Activated naive CD4-positive, alpha-beta T cell treated with anti-CD3 and anti-CD28 coated beads, Interleukin-2, amount 10 ng/mL, durations not matched to agents 7 days and 5 days (primary cell): ENCODE measurements at regions of chr1 and their contacts with region 1.

Region 1: DNA sequence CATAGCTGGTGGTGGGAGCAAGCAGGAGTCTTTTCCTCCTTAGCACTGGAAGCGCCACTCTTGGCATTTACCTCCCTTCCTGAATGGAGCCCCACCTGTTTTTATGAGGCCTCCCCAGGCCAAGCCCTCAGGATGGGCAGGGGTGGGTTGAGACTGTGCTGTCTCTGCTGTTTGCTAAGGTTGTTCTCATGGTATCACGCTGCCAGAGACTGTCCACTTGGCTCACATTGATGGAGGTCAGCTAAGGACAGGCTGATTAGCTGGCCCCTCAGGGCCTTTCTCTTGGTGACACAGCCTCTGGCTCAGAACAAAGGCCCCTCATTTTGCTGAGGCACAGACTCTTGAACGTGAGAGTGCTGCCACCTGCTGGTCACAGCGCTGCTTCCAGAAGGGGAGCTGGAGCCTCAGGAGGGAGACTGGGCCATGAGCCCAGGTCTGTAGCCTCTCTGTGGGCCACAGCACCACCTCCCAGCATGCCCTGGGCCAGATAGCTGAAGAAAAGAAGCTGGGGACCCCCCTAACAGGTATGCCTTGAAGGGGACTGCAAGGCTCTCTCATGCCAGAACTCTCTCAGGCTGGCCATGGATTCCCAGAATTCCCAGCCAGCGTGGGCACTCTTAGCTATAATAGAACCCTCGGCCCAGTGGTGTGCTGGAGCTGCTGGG is 85.6 kb downstream of the CD58 start:
- DNase-seq: peak; percentile 92
- H3K4me3 Mint-ChIP-seq: no peak overlapping the region
- H3K27ac Mint-ChIP-seq: no peak overlapping the region
- H3K4me1 Mint-ChIP-seq: peaks cover 3% of the 10 kb centered on the region
- H3K27me3 Mint-ChIP-seq: peaks cover 17% of the 10 kb centered on the region

Region 2: DNA sequence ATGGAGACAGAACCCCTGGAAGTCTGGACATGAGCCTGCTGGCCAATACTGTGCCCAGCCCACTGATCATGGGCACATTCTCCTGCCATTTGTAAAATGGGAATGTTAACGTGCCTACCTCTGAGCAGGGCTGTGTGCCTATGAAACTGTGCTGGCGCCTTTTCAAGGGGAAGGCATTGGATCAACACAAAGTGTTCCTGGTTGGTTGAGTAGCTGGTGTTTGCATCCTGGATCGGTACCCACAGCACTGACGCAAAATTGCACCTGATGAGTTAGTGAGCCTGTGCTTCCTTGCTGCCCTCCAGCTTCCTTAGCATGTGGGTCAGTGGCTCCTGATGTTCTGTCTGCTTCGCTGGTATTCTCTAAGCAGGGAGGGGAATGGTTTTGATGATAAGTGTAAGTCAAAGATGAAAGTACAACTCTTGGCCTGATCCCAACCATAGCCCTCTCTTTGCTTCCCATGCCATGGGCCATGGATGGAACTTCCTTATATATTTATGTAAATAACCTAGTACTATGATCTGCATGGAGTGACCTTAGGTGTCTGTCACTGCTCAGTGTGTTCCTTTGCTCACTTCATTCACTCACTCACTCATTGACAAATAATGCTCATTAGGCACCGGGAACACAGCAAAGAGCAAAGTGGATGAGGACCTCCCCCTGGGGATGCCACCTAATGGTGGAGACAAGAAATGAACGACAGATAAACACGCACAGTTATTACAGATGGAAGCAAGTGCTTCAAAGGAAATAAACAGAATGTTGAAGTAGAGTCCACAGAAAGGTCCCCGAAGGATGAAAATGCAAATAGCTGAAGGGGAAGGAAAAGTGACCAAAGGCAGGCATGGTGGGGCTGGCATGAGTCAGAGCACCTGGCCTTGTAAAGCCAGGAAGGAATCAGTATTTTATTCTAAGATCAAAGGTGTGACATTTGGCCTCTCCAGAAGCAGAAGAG is 351.2 kb before region 1 on chr1:
- CTCF ChIA-PET with region 1: interaction called, 506 read pairs
- DNase-seq: no peak
- H3K4me3 Mint-ChIP-seq: no peak overlapping the region
- H3K27ac Mint-ChIP-seq: no peak overlapping the region
- H3K4me1 Mint-ChIP-seq: peaks cover 7% of the 10 kb centered on the region
- H3K27me3 Mint-ChIP-seq: peaks cover 11% of the 10 kb centered on the region

Region 3: GRCh38 chr1:116151739-116152576 is 333.2 kb before region 1 on chr1:
- CTCF ChIA-PET with region 1: interaction called, 83 read pairs
- DNase-seq: peak; percentile 76
- H3K4me3 Mint-ChIP-seq: peak overlapping the region; percentile 35
- H3K27ac Mint-ChIP-seq: peak overlapping the region; percentile 50
- H3K4me1 Mint-ChIP-seq: peaks cover 19% of the 10 kb centered on the region
- H3K27me3 Mint-ChIP-seq: peaks cover 21% of the 10 kb centered on the region

Region 4: GRCh38 chr1:116462722-116463121 is 22.5 kb before region 1 on chr1:
- CTCF ChIA-PET with region 1: interaction called, 11 read pairs
- DNase-seq: no peak
- H3K4me3 Mint-ChIP-seq: no peak overlapping the region
- H3K27ac Mint-ChIP-seq: no peak overlapping the region
- H3K4me1 Mint-ChIP-seq: no peaks in the 10 kb centered on the region
- H3K27me3 Mint-ChIP-seq: peaks cover 32% of the 10 kb centered on the region

Region 5: DNA sequence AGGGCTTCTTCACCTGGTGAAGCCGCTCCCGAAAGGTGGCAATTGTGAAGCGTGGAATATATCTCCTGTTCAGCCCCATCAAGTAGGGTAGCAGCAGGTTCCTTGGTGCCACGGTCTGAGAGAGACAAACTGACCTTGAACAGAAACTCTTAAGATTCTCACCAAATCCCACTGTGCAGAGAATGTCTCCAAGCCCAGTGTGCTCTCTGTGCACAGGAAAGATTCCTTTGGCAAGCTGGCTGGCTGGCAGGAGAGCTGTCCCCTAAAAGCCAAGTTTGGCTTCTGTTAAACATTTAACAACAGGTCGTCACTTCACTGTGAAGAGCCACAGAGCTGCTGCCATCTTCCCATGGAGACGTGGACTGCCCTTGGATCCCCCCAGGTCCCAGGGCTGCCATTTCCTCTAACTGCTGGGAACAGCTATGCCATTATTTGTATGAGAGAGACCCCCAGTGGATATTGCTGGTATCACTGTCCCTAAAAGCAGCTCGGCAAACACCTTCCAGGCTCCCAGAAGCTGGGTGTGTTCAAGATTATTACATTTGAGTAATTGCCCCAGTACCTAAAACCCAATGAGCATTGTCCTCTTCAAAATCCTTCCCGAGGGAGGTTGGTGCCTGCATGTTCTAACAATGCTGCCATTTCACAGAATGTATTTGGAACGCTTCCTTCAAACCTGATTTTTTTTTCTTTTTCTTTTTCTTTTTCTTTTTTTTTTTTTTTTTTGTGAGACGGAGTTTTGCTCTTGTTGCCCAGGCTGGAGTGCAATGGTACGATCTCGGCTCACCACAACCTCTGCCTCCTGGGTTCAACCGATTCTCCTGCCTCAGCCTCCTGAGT is 13.8 kb after region 1 on chr1:
- CTCF ChIA-PET with region 1: interaction called, 161 read pairs
- DNase-seq: peak; percentile 65
- H3K4me3 Mint-ChIP-seq: no peak overlapping the region
- H3K27ac Mint-ChIP-seq: no peak overlapping the region
- H3K4me1 Mint-ChIP-seq: peaks cover 59% of the 10 kb centered on the region
- H3K27me3 Mint-ChIP-seq: no peaks in the 10 kb centered on the region

Region 6: DNA sequence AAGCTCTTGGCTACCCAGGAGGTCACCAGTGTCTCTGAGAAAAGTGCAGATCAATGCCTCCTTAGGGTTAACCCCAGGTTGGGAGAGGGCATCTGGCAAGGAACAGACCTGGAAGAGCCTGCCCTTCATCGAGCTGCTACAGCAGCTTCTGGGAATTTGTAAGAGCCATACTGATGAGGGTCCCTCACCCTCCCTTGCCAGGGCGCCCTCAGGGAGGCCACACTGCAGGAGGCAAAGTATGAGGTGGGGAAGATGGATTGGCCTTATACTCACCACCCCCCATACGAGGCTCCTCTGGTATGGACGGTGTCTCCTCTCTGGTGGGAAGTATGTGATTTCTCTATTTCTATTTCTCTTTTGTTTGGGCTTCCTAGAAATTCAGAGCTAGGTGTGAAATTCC is 169.2 kb after region 1 on chr1:
- CTCF ChIA-PET with region 1: no interaction called
- DNase-seq: no peak
- H3K4me3 Mint-ChIP-seq: no peak overlapping the region
- H3K27ac Mint-ChIP-seq: no peak overlapping the region
- H3K4me1 Mint-ChIP-seq: no peaks in the 10 kb centered on the region
- H3K27me3 Mint-ChIP-seq: peaks cover 34% of the 10 kb centered on the region

Region 7: GRCh38 chr1:116693759-116694482 is 208.7 kb after region 1 on chr1:
- CTCF ChIA-PET with region 1: no interaction called
- DNase-seq: no peak
- H3K4me3 Mint-ChIP-seq: no peak overlapping the region
- H3K27ac Mint-ChIP-seq: no peak overlapping the region
- H3K4me1 Mint-ChIP-seq: no peaks in the 10 kb centered on the region
- H3K27me3 Mint-ChIP-seq: peaks cover 11% of the 10 kb centered on the region